ENCODE measurements at regions of chr3 and their contacts with region 1.

Region 1: GRCh38 chr3:15557511-15557946 is 36.0 kb upstream of the COLQ start:
- DNase-seq: peak; percentile 86
- ATAC-seq: peak; percentile 97
- H3K4me3 Mint-ChIP-seq: no peak overlapping the region
- H3K27ac Mint-ChIP-seq: peak overlapping the region; percentile 66
- H3K4me1 Mint-ChIP-seq: peaks cover 21% of the 10 kb centered on the region
- H3K27me3 Mint-ChIP-seq: no peaks in the 10 kb centered on the region

Region 2: GRCh38 chr3:15300323-15301078 is 257.0 kb before region 1 on chr3:
- CTCF ChIA-PET with region 1: no interaction called
- DNase-seq: no peak
- ATAC-seq: no peak
- H3K4me3 Mint-ChIP-seq: no peak overlapping the region
- H3K27ac Mint-ChIP-seq: peak overlapping the region; percentile 11
- H3K4me1 Mint-ChIP-seq: peaks cover 75% of the 10 kb centered on the region
- H3K27me3 Mint-ChIP-seq: no peaks in the 10 kb centered on the region

Region 3: GRCh38 chr3:15443826-15444524 is 113.6 kb before region 1 on chr3:
- CTCF ChIA-PET with region 1: no interaction called
- DNase-seq: no peak
- ATAC-seq: no peak
- H3K4me3 Mint-ChIP-seq: no peak overlapping the region
- H3K27ac Mint-ChIP-seq: no peak overlapping the region
- H3K4me1 Mint-ChIP-seq: peaks cover 17% of the 10 kb centered on the region
- H3K27me3 Mint-ChIP-seq: no peaks in the 10 kb centered on the region

Region 4: DNA sequence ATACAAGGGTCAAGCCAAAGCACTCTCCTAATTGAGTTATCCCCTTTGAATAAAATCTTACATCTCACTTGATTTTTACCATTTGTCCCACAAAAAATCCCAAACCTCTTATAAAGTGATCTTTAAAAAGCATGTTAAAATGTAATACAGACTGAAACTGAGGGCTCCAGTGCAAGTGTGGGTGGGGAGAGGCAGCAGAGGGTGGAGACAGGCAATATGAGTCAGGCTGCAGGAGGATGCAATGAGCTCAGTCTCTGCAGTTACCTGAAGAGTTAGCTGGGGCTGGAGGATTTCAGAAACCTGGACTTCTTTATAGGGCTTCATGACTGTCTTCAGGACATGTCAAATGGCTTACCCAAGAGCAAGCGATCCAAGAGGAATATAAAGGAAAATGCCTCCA is 21.8 kb before region 1 on chr3:
- CTCF ChIA-PET with region 1: interaction called, 15 read pairs
- DNase-seq: peak; percentile 82
- ATAC-seq: peak; percentile 99
- H3K4me3 Mint-ChIP-seq: peak overlapping the region; percentile 37
- H3K27ac Mint-ChIP-seq: peak overlapping the region; percentile 94
- H3K4me1 Mint-ChIP-seq: peaks cover 52% of the 10 kb centered on the region
- H3K27me3 Mint-ChIP-seq: no peaks in the 10 kb centered on the region